Breast epithelium (tissue), 4 donors: ENCODE measurements at regions of chr6 and their contacts with region 1.

Region 1: DNA sequence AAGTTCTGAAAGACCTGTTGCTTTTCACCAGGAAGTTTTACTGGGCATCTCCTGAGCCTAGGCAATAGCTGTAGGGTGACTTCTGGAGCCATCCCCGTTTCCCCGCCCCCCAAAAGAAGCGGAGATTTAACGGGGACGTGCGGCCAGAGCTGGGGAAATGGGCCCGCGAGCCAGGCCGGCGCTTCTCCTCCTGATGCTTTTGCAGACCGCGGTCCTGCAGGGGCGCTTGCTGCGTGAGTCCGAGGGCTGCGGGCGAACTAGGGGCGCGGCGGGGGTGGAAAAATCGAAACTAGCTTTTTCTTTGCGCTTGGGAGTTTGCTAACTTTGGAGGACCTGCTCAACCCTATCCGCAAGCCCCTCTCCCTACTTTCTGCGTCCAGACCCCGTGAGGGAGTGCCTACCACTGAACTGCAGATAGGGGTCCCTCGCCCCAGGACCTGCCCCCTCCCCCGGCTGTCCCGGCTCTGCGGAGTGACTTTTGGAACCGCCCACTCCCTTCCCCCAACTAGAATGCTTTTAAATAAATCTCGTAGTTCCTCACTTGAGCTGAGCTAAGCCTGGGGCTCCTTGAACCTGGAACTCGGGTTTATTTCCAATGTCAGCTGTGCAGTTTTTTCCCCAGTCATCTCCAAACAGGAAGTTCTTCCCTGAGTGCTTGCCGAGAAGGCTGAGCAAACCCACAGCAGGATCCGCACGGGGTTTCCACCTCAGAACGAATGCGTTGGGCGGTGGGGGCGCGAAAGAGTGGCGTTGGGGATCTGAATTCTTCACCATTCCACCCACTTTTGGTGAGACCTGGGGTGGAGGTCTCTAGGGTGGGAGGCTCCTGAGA is at the start of gene HFE:
- DNase-seq: peak in 1 of 2 donors; percentile 41
- H3K4me3 ChIP-seq: peak within 1 kb of the TSS; percentile 61 to 81 (median 65)
- H3K27ac ChIP-seq: peak within 1 kb of the TSS; percentile 92 to 94
- H3K4me1 ChIP-seq: no peaks in the 10 kb centered on the region
- H3K27me3 ChIP-seq: no peaks in the 10 kb centered on the region
- CTCF ChIP-seq: no peak
- POLR2A ChIP-seq: no peak
- total RNA-seq, gene HFE: 5.6 to 9.4 (median 8.6) TPM

Region 2: DNA sequence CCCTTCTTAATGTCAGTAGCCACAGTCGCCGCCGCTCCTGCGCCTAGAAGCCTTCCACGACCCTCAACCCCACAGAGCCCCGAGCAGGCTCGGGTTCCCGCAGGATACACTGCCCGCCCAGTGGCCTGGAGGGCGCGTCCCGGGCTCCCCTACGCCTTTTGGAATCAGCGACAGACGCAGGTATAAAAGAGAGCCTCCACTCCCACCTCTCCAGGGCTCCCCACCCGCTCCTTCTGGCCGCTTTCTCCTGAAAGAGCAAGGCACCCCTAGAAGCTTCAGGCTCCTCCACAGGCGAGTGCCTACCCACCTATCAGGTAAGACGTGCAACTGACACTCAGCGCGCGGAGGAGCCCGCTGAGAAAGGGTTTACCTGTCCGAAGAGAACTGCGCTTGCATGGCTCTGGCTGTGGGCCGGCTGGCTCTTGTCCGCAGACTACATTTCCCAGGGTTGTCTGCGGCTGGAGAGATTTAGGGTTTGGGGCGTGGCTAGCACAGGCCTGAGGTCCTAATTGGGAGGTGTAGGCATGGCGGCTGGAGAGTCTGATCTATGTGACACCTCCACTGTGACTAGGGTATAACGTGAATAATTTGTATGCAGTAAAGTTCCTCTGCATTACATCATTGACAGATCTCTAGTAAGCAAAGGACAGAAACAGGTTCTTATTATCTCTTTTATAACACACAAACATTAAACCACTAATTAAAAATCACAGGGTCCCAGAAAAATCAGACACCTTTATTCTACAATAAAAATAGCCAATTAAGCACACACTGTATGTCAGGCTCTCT is 1287.5 kb after region 1 on chr6:
- intact Hi-C with region 1: loop called (anchors 5 kb)
- DNase-seq: peak; percentile 79 to 83
- H3K4me3 ChIP-seq: peak overlapping the region; percentile 56 to 78 (median 77)
- H3K27ac ChIP-seq: peak overlapping the region; percentile 82 to 92
- H3K4me1 ChIP-seq: no peaks in the 10 kb centered on the region
- H3K27me3 ChIP-seq: no peaks in the 10 kb centered on the region
- CTCF ChIP-seq: no peak
- POLR2A ChIP-seq: no peak